K562 (cell line): ENCODE measurements at regions of chr1 and their contacts with region 1.

Region 1: GRCh38 chr1:11681071-11681771 is at the start of gene MAD2L2:
- DNase-seq: peak; percentile 95 to 99 (median 98)
- ATAC-seq: peak; percentile 94
- H3K4me3 ChIP-seq: peak within 1 kb of the TSS; percentile 99
- H3K27ac ChIP-seq: peak within 1 kb of the TSS; percentile 93
- H3K4me1 ChIP-seq: peaks cover 11 to 32% of the 10 kb centered on the region in 2 experiments
- H3K27me3 ChIP-seq: no peaks in the 10 kb centered on the region
- CTCF ChIP-seq: no peak
- EP300 ChIP-seq: peak; percentile 40; the same call in 1 of the 2 replicates
- POLR2A ChIP-seq: peak; percentile 81
- RAD21 ChIP-seq: no peak
- polyA plus RNA-seq, gene MAD2L2: 12.4 to 25.9 TPM

Region 2: DNA sequence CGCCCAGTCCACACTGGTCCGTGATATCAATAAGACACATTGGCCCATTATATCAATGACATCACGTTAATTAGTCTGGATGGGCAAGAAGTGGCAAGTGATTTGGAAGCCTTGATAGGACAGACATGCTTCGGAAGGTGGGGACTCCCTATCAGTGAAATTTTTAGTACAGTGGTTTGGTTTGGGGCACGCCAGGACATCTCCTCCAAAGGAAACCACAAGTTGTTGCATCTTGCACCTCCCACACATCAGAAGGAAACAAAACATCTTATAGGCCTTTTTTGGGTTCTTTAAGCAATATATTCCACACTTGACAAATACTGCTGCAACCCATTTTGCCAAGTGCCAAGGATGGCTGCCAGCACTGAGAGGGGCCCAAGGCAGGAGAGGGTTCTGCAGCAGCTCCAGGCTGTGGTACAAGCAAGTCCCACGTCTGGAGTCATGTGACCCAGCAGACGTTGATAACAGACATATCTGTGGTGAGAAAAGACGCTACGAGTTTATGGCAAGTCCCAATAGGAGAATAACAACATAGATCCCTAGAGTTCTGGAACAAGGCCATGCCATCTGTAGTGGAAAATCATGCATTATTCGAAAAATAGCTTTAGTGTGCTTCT is 297.6 kb before region 1 on chr1:
- CTCF ChIA-PET with region 1: no interaction called
- POLR2A ChIA-PET with region 1: no interaction called
- in situ Hi-C with region 1: no loop called
- intact Hi-C with region 1: no loop called
- DNase-seq: no peak
- ATAC-seq: no peak
- H3K4me3 ChIP-seq: no peak overlapping the region
- H3K27ac ChIP-seq: no peak overlapping the region
- H3K4me1 ChIP-seq: no peaks in the 10 kb centered on the region; a peak in 2 of 5 replicates
- H3K27me3 ChIP-seq: peaks cover 23 to 70% of the 10 kb centered on the region in 2 experiments; a peak in 4 of 5 replicates
- CTCF ChIP-seq: no peak
- EP300 ChIP-seq: no peak
- POLR2A ChIP-seq: no peak
- RAD21 ChIP-seq: no peak

Region 3: DNA sequence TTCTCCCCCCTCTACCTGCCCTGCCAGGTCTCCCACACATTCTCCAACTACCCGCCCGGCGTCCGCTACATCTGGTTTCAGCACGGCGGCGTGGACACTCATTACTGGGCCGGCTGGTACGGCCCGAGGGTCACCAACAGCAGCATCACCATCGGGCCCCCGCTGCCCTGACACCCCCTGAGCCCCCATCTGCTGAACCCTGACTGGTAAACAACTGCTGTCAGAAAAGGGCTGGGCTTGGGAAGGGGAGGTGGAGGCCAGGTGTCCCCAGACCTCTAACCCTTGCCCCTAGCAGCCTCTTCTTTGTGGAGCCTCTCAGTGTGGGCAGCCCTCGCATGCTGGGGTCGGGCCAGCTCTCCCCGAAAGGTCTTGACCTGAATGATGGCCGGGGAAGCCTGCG is 20.1 kb before region 1 on chr1:
- CTCF ChIA-PET with region 1: no interaction called
- POLR2A ChIA-PET with region 1: interaction called, 17 read pairs
- in situ Hi-C with region 1: no loop called
- intact Hi-C with region 1: no loop called
- DNase-seq: no peak
- ATAC-seq: no peak
- H3K4me3 ChIP-seq: no peak overlapping the region
- H3K27ac ChIP-seq: no peak overlapping the region
- H3K4me1 ChIP-seq: peaks cover 6 to 36% of the 10 kb centered on the region in 2 experiments; a peak in 4 of 5 replicates
- H3K27me3 ChIP-seq: no peaks in the 10 kb centered on the region
- CTCF ChIP-seq: no peak
- EP300 ChIP-seq: no peak
- POLR2A ChIP-seq: no peak
- RAD21 ChIP-seq: no peak

Region 4: DNA sequence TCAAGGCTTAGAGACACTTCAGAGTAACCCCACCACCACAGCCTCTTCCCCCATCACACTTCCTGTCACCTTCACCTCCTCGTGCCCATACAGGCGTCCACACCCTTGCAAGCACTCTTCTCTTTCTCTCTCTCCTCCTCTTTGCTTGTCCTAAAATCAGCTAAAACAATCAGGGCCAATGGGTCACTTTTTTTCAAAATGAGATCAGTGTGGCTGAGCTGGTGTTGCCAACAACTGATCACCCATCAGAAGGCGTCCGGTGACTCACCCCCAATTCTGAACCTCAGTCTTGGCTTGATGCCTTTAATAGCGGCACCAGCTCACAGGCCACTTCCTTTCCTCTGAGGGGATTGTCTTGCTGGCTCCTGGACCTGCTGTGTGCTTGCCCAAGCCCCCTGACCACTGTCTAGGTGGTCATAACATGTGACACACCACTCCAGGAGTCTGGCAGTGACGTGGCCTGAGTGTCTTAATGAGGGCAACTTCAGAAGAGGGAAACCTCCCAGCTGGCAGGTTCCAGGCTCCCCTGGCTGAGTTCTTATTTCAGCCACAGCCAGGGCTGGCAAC is 11.9 kb after region 1 on chr1:
- CTCF ChIA-PET with region 1: no interaction called
- POLR2A ChIA-PET with region 1: interaction called, 14 read pairs
- in situ Hi-C with region 1: no loop called
- intact Hi-C with region 1: no loop called
- DNase-seq: peak; percentile 56 to 65 (median 60)
- ATAC-seq: peak; percentile 33
- H3K4me3 ChIP-seq: no peak overlapping the region
- H3K27ac ChIP-seq: no peak overlapping the region
- H3K4me1 ChIP-seq: peaks cover 42 to 57% of the 10 kb centered on the region in 2 experiments
- H3K27me3 ChIP-seq: no peaks in the 10 kb centered on the region
- CTCF ChIP-seq: no peak
- EP300 ChIP-seq: no peak
- POLR2A ChIP-seq: no peak
- RAD21 ChIP-seq: no peak

Region 5: GRCh38 chr1:12052997-12053686 is 371.9 kb after region 1 on chr1:
- CTCF ChIA-PET with region 1: no interaction called
- POLR2A ChIA-PET with region 1: no interaction called
- in situ Hi-C with region 1: no loop called
- intact Hi-C with region 1: no loop called
- DNase-seq: no peak
- ATAC-seq: peak; percentile 12
- H3K4me3 ChIP-seq: no peak overlapping the region
- H3K27ac ChIP-seq: no peak overlapping the region
- H3K4me1 ChIP-seq: peaks cover 27 to 42% of the 10 kb centered on the region in 2 experiments
- H3K27me3 ChIP-seq: no peaks in the 10 kb centered on the region
- CTCF ChIP-seq: peak; percentile 17 to 36 (median 28); a peak in 2 of 6 replicates
- EP300 ChIP-seq: no peak
- POLR2A ChIP-seq: no peak
- RAD21 ChIP-seq: no peak; a peak in 1 of 4 replicates